OCI-LY7 (cell line): ENCODE measurements at regions of chr7 and their contacts with region 1.

Region 1: DNA sequence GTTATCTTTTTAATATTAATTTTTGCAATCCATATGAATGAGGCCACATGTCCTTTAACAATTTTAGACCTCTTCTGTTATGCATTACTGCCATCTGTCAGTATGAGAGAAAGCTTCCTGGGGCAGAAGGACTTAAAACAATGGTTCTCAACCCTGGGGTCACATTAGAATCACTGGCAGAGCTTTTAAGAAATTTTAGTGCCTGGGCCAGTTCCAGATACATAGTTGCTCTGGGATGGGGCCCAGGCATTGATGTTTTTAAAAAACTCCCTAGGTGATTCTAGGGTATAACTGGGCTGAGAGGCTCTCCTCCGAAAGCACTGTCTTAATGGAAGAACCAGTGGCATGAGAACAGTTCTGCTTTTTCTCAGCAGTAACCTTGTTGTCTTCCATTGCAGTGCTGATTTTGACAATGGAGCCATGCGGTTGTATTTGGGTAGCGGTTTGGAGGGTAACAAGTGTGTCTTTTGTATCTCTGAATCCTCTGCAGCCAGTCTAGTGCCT is 226.9 kb downstream of the AUTS2 start:
- DNase-seq: peak; percentile 74
- H3K4me3 ChIP-seq: peak overlapping the region; percentile 69
- H3K27ac ChIP-seq: peak overlapping the region; percentile 99
- H3K4me1 ChIP-seq: peaks cover 78% of the 10 kb centered on the region
- CTCF ChIP-seq: peak; percentile 75

Region 2: DNA sequence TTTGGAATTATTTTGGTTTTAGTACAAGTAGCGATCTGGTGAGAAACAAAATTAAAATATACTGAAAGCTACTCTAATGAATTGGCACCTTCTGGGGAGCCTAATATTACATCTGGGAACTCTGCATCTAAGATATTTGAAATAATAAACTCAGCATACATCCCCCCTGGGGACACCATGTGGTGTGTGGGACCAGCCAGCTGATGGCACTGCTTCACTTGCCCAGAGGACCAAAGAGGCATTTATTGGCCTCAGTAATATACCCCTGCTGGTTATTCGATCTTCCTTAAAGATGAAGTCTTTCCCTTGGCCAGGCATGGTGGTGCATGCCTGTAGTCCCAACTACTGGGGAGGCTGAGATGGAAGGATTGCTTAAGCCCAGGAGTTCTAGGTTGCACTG is 422.0 kb before region 1 on chr7:
- CTCF ChIA-PET with region 1: no interaction called
- POLR2A ChIA-PET with region 1: no interaction called
- intact Hi-C with region 1: loop called (anchors 2 kb)
- DNase-seq: peak; percentile 73
- H3K4me3 ChIP-seq: no peak overlapping the region
- H3K27ac ChIP-seq: no peak overlapping the region
- H3K4me1 ChIP-seq: no peaks in the 10 kb centered on the region
- CTCF ChIP-seq: peak; percentile 82

Region 3: DNA sequence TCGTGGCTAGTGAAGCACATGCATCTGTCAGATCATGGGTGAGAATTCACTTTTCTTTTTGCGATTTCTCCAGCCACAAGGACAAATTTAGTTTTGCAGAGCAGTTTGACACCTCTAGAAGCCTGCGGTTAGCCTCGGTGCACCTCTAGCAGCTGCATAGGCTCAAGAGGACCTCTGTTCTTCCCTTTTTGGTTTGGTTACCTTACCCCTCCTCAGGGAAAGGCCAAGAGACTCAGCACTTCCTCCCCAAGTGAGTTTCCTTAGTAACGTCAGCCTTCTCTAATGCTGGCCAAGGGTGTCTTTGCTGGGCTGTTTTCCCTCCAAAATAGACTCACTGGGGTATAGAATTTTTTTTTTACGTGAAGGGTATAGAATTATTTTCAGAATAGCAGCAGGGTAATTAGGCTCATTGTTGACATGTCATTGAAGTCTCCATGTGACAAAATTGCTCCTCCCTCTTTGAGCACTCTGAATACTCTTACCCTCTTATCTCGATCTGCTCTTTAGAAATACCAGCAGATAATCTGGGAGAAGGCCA is 129.0 kb before region 1 on chr7:
- CTCF ChIA-PET with region 1: no interaction called
- POLR2A ChIA-PET with region 1: interaction called, 7 read pairs
- intact Hi-C with region 1: loop called (anchors 1 kb)
- DNase-seq: peak; percentile 95
- H3K4me3 ChIP-seq: peak overlapping the region; percentile 58
- H3K27ac ChIP-seq: peak overlapping the region; percentile 98
- H3K4me1 ChIP-seq: peaks cover 96% of the 10 kb centered on the region
- CTCF ChIP-seq: no peak

Region 4: GRCh38 chr7:69837387-69838068 is 12.4 kb after region 1 on chr7:
- CTCF ChIA-PET with region 1: interaction called, 6 read pairs
- POLR2A ChIA-PET with region 1: interaction called, 162 read pairs
- intact Hi-C with region 1: no loop called
- DNase-seq: no peak
- H3K4me3 ChIP-seq: no peak overlapping the region
- H3K27ac ChIP-seq: no peak overlapping the region
- H3K4me1 ChIP-seq: peaks cover 62% of the 10 kb centered on the region
- CTCF ChIP-seq: no peak

Region 5: DNA sequence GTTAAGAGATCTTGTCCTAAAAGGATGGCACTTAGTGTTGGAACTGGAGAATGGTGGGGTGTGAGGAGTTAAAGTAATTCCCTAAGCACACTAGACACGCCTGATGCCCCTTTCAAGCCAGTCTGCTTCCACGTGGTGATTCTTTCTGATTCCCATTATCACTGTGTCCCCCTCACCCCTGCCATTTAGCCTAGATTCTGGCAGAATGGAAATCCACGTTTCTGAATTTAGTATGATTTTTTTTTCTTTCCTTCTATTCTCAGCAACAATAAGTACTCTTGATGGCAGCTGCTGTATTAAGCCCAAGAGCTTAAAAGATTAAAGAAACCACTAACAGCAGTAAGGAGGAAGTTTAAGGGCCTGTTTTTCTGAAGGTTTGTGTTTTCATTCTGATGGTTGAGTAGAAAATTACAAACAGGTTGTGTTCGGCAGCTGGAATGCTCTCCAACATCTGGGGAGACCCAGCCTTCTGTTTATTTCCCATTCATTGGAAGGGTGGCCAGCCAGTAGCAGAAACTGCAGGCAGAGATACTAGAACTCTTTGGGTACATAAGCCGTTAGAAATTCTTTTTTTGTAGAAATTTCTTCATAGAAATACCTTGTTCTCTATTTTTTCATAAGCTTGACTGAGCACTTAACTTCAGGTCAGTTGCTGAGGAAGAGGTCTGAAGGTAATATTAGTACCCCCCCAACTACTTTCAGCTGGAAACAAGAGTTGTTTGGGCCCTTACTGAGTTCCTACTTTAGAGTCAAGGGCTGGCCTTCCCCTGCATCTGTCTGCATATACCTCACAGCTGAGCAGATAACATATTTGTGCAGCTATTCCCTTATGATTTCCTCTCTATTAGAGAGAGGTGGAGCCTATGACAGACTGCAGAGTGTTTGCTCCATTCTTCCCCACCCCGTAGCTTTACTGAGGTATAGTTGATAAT is 128.2 kb after region 1 on chr7:
- CTCF ChIA-PET with region 1: no interaction called
- POLR2A ChIA-PET with region 1: interaction called, 14 read pairs
- intact Hi-C with region 1: loop called (anchors 5 kb)
- DNase-seq: peak; percentile 86
- H3K4me3 ChIP-seq: peak overlapping the region; percentile 42
- H3K27ac ChIP-seq: peak overlapping the region; percentile 96
- H3K4me1 ChIP-seq: peaks cover 70% of the 10 kb centered on the region
- CTCF ChIP-seq: no peak